ENCODE measurements at regions of chr6 and their contacts with region 1.

Region 1: DNA sequence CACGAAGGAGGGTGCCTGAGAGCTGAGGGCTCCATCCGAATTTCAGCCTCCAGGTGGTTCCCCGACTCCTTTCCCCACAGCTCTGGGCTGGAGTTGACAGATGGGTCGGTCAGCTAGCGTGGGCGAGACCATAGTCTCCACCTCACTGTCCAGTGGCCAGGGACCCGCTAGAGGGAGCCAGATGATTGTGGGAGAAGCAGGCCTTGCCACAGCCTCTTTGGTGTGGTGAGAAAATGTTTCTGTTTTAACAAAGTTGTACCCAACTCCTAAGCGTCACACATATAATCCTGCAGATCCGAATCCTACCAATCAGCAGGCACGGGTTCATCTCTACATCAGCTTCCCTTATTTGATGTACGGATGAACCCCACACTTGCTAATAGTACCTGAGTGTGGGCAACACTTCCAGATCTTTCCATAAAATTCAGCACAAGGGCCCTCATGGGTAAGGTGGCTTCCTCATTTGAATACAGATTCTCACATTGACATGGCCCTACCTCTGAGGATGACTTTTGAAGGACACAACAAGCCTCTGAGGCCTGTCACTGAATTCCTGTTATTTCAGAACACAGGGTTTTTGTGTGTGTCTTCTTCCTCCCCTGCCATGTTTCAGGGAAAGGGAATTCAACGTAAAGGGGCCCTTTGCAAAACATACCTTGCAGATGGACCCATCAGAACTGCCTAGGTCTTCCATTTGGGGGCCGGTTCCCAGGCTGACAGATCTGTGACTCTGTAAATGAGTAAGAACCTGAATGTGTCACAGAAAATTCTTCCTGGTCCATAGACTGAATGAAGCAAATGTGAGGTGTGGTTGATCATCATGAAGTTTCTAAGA is 103.2 kb upstream of the DUSP22 start:
- DNase-seq: peak; percentile 77
- H3K4me3 Mint-ChIP-seq: peak overlapping the region; percentile 48
- H3K27ac Mint-ChIP-seq: peak overlapping the region; percentile 76
- H3K4me1 Mint-ChIP-seq: peaks cover 52% of the 10 kb centered on the region
- H3K27me3 Mint-ChIP-seq: peaks cover 3% of the 10 kb centered on the region

Region 2: DNA sequence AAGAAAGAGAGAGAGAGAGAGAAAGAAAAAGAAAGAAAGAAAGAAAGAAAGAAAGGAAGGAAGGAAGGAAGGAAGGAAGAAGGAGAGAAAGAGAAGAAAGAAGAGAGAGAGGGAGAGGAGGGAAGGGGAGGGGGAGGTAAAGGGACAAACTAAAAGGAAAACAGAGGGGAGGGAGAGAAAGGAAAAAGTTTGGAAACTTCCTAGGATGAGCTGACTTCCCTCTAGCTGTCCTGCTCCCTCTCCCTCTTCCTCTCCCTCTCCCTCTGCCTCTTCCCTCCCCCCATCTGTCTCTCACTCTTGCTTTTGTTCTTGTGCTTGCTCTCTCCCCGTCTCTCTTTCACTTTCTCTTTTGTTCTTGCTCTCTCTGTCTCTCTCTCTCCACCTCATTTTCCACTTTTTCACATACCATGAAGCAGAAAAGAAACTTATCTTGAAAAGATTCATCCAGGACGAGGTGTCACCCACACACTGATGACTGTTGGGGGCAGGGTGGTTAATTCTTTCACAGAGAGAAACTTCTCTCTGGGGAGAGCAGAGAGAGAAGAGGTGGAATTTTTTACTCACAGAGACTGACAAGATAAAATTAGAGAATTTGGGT is 46.8 kb after region 1 on chr6:
- intact Hi-C with region 1: loop called (anchors 1 kb)
- DNase-seq: peak; percentile 41
- H3K4me3 Mint-ChIP-seq: peak overlapping the region; percentile 56
- H3K27ac Mint-ChIP-seq: peak overlapping the region; percentile 88
- H3K4me1 Mint-ChIP-seq: peaks cover 57% of the 10 kb centered on the region
- H3K27me3 Mint-ChIP-seq: no peaks in the 10 kb centered on the region

Region 3: GRCh38 chr6:319177-320131 is 130.4 kb after region 1 on chr6:
- intact Hi-C with region 1: loop called (anchors 1 kb)
- DNase-seq: no peak
- H3K4me3 Mint-ChIP-seq: no peak overlapping the region
- H3K27ac Mint-ChIP-seq: no peak overlapping the region
- H3K4me1 Mint-ChIP-seq: peaks cover 10% of the 10 kb centered on the region
- H3K27me3 Mint-ChIP-seq: peaks cover 2% of the 10 kb centered on the region

Region 4: GRCh38 chr6:399785-400534 is 210.9 kb after region 1 on chr6:
- intact Hi-C with region 1: loop called (anchors 2 kb)
- DNase-seq: peak; percentile 40
- H3K4me3 Mint-ChIP-seq: peak overlapping the region; percentile 79
- H3K27ac Mint-ChIP-seq: peak overlapping the region; percentile 56
- H3K4me1 Mint-ChIP-seq: peaks cover 93% of the 10 kb centered on the region
- H3K27me3 Mint-ChIP-seq: no peaks in the 10 kb centered on the region

Region 5: DNA sequence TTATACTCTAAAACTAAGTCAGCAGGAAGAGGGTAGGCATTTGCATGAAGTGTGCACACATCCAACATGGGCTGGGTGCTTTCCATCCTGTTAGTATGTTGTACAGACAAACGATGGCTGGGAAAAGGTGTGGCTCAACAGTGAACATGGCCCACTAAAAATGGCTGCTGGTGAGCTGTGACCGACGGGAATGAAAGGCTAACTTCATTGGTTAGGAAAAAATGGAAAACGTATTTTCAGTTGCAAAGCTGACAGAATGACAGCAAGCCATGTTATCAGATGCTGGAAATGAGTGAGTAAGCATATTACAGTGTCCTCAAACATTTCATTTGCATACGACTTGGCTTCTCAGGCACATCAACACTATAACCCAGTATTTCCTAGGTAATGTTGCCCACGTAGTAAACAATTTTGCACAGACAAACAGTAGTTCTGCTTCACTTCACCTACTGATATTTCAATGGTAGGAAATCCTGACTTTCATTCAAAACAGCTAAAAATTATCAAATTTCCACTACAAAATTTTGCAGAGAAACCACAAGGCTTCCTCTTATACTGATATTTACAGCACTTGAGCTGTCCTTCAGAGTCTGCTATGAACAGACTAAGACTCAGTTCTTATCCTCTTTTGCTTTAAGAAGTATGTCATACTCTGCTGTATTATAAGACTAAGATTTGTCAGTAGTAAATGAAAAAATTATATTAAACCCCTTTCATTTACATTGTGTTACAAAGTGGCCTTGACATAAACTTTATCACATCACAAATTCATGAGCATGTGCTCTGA is 301.4 kb after region 1 on chr6:
- intact Hi-C with region 1: loop called (anchors 1 kb)
- DNase-seq: peak; percentile 40
- H3K4me3 Mint-ChIP-seq: peak overlapping the region; percentile 62
- H3K27ac Mint-ChIP-seq: peak overlapping the region; percentile 99
- H3K4me1 Mint-ChIP-seq: peaks cover 77% of the 10 kb centered on the region
- H3K27me3 Mint-ChIP-seq: no peaks in the 10 kb centered on the region

Region 6: DNA sequence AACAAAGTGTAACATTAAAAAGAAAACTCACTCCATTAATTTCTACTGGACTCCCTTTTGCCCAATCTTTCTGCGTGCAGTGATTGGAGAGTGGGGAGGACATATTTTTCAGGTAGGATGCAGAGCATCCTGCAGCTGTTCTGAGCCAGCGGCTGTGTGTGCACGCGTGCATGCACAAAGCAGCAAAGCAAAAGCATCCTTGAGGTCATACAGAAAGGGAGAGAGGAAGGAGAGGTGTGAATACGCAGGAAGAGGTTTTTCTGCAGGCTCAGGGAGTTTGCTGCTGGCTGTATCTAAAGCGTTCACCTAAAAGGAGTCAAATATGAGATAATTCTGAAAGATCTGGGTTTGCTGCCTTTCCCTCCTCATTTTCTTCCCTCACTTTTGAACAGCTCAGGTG is 359.5 kb after region 1 on chr6:
- intact Hi-C with region 1: loop called (anchors 1 kb)
- DNase-seq: peak; percentile 43
- H3K4me3 Mint-ChIP-seq: peak overlapping the region; percentile 72
- H3K27ac Mint-ChIP-seq: peak overlapping the region; percentile 95
- H3K4me1 Mint-ChIP-seq: peaks cover 75% of the 10 kb centered on the region
- H3K27me3 Mint-ChIP-seq: no peaks in the 10 kb centered on the region

Region 7: GRCh38 chr6:854406-855118 is 665.5 kb after region 1 on chr6:
- intact Hi-C with region 1: no loop called
- DNase-seq: no peak
- H3K4me3 Mint-ChIP-seq: no peak overlapping the region
- H3K27ac Mint-ChIP-seq: no peak overlapping the region
- H3K4me1 Mint-ChIP-seq: no peaks in the 10 kb centered on the region
- H3K27me3 Mint-ChIP-seq: peaks cover 3% of the 10 kb centered on the region